ENCODE measurements at regions of chr1 and their contacts with region 1.

Region 1: DNA sequence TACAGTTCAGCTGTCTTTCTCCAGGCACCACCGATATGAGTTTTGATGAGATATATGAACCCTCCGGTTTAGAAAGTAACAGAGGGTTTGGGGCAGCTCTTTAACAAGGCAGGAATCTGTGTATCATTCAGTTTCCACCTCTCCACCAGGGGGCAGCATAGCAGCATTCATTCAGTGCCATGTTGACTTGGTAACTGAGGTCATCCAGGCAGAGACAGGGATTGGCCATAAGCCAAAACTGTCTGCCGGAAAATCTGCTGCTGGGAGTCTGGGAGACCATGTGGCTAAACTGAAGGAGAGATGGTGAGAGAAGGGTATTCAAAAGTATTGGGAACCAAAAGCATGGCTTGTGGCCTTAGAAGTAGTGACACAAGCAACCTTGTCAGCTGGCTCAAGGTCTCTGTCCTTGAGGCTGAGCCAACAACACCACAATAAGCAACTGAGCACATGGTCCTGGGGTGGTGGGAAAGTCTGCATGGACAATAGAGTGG is 98.5 kb downstream of the LMX1A start:
- DNase-seq: peak; percentile 97
- H3K4me3 Mint-ChIP-seq: no peak overlapping the region
- H3K27ac Mint-ChIP-seq: no peak overlapping the region
- H3K4me1 Mint-ChIP-seq: peaks cover 11% of the 10 kb centered on the region
- H3K27me3 Mint-ChIP-seq: peaks cover 45% of the 10 kb centered on the region
- CTCF ChIP-seq: peak; percentile 94

Region 2: GRCh38 chr1:164983023-164983650 is 274.9 kb before region 1 on chr1:
- CTCF ChIA-PET with region 1: no interaction called
- POLR2A ChIA-PET with region 1: no interaction called
- intact Hi-C with region 1: no loop called
- DNase-seq: no peak
- H3K4me3 Mint-ChIP-seq: no peak overlapping the region
- H3K27ac Mint-ChIP-seq: no peak overlapping the region
- H3K4me1 Mint-ChIP-seq: no peaks in the 10 kb centered on the region
- H3K27me3 Mint-ChIP-seq: peaks cover 2% of the 10 kb centered on the region
- CTCF ChIP-seq: no peak

Region 3: DNA sequence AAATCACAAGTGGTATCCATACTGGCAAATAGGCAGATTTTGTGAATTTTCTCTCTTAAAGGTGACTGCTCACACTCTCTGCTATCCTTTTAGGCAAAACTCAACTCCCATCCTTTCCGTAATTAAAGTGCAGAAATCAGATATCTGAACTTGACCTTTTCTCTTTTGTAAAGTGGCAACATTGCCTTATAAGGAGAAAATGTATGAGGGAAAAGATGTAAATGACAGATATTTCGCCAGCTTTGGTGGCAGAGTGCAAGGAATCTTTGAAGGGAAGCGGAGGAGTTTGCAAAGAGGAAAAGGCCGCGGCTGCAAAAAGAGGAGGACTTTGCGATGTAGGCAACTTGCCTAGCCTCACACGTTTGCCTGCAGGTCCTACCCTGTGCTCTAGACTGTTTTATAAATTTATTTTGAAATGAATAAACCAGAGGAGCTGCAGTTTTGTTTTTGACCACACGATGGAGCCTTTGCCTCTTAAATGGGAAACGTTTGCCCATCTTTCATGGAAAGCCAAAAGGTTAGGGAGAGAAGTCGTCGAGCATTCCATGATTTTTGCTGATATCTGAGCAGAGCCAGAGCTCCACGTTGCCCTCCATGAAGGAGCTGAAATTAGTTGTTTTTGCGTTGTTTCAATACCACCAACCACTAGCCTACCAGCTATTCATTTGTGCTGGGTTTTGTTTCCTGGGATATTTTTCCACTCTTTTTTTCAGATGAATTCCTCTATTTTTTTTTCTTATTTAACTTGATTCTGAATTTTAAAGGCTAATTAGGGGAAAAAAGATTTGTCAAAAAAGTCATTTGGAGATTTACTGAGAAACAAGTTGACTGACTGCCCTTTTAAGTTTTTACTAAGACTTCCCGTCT is 143.8 kb before region 1 on chr1:
- CTCF ChIA-PET with region 1: interaction called, 14 read pairs
- POLR2A ChIA-PET with region 1: no interaction called
- intact Hi-C with region 1: loop called (anchors 5 kb)
- DNase-seq: peak; percentile 85
- H3K4me3 Mint-ChIP-seq: no peak overlapping the region
- H3K27ac Mint-ChIP-seq: no peak overlapping the region
- H3K4me1 Mint-ChIP-seq: peaks cover 17% of the 10 kb centered on the region
- H3K27me3 Mint-ChIP-seq: peaks cover 16% of the 10 kb centered on the region
- CTCF ChIP-seq: peak; percentile 96

Region 4: DNA sequence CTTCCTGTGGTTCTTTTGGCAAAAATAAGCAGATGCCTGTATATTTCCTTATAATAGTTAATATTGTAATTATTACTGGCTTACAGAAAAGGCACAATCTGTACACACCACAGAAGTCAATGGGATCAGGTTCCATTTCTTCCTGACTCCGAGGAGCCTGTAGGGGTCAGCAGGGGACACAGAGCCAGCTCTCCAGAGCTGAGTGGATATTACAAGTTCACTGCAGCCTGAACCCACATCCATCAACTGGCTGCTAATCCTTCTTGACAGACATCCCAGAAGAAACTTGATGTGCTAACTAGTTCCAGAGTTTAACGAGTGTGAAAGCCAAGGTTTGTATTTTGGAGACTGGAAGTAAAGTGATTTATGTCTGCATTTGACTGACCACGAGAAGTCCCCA is 105.3 kb before region 1 on chr1:
- CTCF ChIA-PET with region 1: interaction called, 11 read pairs
- POLR2A ChIA-PET with region 1: no interaction called
- intact Hi-C with region 1: no loop called
- DNase-seq: peak; percentile 60
- H3K4me3 Mint-ChIP-seq: no peak overlapping the region
- H3K27ac Mint-ChIP-seq: no peak overlapping the region
- H3K4me1 Mint-ChIP-seq: no peaks in the 10 kb centered on the region
- H3K27me3 Mint-ChIP-seq: peaks cover 45% of the 10 kb centered on the region
- CTCF ChIP-seq: no peak

Region 5: GRCh38 chr1:165235777-165236291 is 22.2 kb before region 1 on chr1:
- CTCF ChIA-PET with region 1: interaction called, 15 read pairs
- POLR2A ChIA-PET with region 1: no interaction called
- intact Hi-C with region 1: no loop called
- DNase-seq: no peak
- H3K4me3 Mint-ChIP-seq: no peak overlapping the region
- H3K27ac Mint-ChIP-seq: no peak overlapping the region
- H3K4me1 Mint-ChIP-seq: no peaks in the 10 kb centered on the region
- H3K27me3 Mint-ChIP-seq: peaks cover 68% of the 10 kb centered on the region
- CTCF ChIP-seq: no peak

Region 6: DNA sequence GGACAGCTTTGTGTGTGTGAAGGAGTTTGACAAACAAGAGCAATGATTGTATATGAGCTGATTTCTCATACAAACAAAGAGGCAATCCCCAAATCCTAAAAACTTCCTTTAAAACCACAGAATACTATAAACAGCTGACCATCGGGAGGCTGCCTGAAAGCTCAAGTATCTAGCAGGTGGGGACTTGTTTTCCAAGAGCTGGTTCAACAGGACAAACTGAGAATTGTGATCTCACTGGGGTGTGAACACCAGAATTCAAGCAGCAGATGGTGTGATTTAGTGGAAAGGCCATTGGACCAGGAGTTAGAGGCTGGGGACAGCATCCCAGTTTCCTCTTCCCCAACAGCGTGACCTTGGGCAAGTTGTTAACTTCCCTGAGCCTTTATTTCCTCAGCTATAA is 84.6 kb after region 1 on chr1:
- CTCF ChIA-PET with region 1: interaction called, 24 read pairs
- POLR2A ChIA-PET with region 1: no interaction called
- intact Hi-C with region 1: no loop called
- DNase-seq: no peak
- H3K4me3 Mint-ChIP-seq: no peak overlapping the region
- H3K27ac Mint-ChIP-seq: no peak overlapping the region
- H3K4me1 Mint-ChIP-seq: peaks cover 7% of the 10 kb centered on the region
- H3K27me3 Mint-ChIP-seq: peaks cover 54% of the 10 kb centered on the region
- CTCF ChIP-seq: no peak

Region 7: GRCh38 chr1:165383067-165383466 is 125.1 kb after region 1 on chr1:
- CTCF ChIA-PET with region 1: interaction called, 30 read pairs
- POLR2A ChIA-PET with region 1: no interaction called
- intact Hi-C with region 1: no loop called
- DNase-seq: peak; percentile 95
- H3K4me3 Mint-ChIP-seq: no peak overlapping the region
- H3K27ac Mint-ChIP-seq: peak overlapping the region; percentile 5
- H3K4me1 Mint-ChIP-seq: peaks cover 19% of the 10 kb centered on the region
- H3K27me3 Mint-ChIP-seq: peaks cover 22% of the 10 kb centered on the region
- CTCF ChIP-seq: no peak